T-cell (primary cell): ENCODE measurements at regions of chr5 and their contacts with region 1.

Region 1: DNA sequence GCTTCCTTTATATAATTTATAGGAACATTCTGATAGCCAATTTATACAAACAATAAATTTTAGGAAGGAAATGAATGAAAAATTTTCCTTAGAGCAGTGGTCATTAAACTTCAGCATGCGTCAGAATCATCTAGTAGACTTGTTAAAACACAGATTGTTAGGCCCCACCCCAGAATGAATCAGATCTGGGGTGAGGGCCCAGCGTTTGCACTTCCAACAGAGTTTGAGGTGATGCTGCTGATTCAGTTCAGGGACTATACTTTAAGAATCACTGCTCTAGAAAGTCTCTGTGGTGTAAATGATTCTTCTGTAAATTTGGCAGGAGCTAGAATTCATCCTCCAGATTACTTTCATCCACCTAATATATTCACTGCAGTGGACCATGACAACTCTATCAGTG is 80.4 kb downstream of the SLC12A2 start:
- DNase-seq: no peak
- ATAC-seq: no peak
- H3K4me3 ChIP-seq: no peak overlapping the region
- H3K4me3 Mint-ChIP-seq: no peak overlapping the region
- H3K27ac ChIP-seq: no peak overlapping the region
- H3K27ac Mint-ChIP-seq: no peak overlapping the region
- H3K4me1 ChIP-seq: no peaks in the 10 kb centered on the region
- H3K4me1 Mint-ChIP-seq: no peaks in the 10 kb centered on the region
- H3K27me3 ChIP-seq: no peaks in the 10 kb centered on the region
- H3K27me3 Mint-ChIP-seq: no peaks in the 10 kb centered on the region

Region 2: DNA sequence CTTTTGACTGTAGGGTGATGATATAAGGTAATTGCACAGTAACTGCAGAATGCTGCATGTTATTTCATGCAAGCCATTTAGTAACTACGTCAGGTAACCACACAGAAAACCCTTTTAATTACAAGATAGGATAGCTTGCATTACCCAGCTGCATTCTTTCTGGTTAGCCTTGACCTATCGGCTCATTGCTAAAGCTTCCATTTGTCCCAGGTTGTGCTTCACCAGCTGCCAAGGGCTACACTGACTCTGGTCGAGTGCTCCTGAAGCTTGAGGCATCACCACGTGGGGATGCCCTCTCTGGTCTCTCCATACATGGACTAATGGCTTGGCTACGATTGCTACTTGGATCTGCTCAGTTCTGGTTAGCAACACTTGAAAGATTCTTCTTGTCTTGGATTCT is 161.6 kb before region 1 on chr5:
- CTCF ChIA-PET with region 1: no interaction called
- POLR2A ChIA-PET with region 1: interaction called in 1 of 2 experiments, 10 read pairs
- DNase-seq: no peak
- ATAC-seq: no peak
- H3K4me3 ChIP-seq: no peak overlapping the region
- H3K4me3 Mint-ChIP-seq: no peak overlapping the region
- H3K27ac ChIP-seq: no peak overlapping the region
- H3K27ac Mint-ChIP-seq: no peak overlapping the region
- H3K4me1 ChIP-seq: no peaks in the 10 kb centered on the region
- H3K4me1 Mint-ChIP-seq: no peaks in the 10 kb centered on the region
- H3K27me3 ChIP-seq: no peaks in the 10 kb centered on the region
- H3K27me3 Mint-ChIP-seq: no peaks in the 10 kb centered on the region